PC-3 (cell line): ENCODE measurements at regions of chr2 and their contacts with region 1.

Region 1: DNA sequence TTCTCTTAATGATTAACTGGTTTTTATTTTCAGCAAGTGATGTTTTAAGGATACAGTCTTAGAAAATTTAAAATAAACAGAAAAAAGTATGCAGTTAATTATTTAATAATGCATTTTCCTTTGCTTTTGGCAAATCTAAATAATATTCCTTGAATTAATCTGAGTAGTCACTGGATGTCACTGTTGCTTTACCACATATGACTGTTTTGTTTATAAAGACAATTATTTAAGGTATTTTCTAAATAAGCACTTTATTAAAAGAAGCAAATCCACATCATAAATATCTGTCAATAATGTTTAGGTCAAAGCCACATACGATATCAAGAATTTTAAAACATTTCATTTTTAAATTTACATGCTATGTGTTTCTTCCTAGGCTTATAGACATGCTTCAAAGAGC is 40.6 kb upstream of the TFPI start:
- DNase-seq: no peak
- ATAC-seq: no peak
- H3K4me3 ChIP-seq: no peak overlapping the region
- H3K27ac ChIP-seq: no peak overlapping the region
- H3K4me1 ChIP-seq: no peaks in the 10 kb centered on the region
- H3K27me3 ChIP-seq: no peaks in the 10 kb centered on the region
- CTCF ChIP-seq: peak; percentile 45; the same call in 1 of the 2 replicates

Region 2: DNA sequence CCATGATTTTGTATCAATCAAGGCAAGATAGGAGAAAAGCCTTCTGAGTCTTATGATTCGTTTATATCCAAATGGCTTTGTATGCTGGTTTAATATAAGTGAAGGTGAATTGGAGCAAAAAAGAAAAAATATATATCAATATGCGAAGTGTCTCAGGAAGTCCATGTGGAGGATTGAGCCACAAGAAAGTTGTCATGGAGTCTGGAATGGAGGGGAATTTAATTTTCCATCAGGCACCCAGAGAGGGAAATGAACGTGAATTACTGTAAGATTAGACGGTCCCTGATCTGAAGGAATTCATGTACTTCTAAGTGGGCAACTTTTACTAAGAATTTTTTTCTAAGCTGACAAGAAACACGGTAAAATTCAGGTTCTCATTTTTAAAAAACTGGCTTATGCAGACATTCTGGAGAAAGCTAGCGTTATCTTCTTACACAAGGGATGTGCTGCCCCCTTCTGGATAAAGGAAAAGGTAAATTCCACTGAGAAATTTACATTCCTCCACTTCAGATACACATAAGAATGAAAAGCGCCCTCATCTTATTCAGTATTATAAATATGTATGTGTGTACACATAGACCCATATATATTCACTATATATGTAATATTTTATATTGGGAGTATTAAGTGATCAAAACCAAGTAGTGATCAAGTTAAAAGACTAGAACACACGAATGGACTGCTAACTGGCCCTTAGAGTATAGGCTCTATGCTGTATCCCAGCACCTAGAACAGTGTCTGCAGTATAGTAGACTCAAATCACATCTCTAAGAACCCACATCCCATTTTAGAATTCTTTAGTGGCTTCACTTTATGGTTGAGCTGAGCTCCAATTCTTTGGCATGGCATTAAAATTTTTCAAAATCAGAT is 248.4 kb after region 1 on chr2:
- CTCF ChIA-PET with region 1: interaction called, 3 read pairs
- POLR2A ChIA-PET with region 1: no interaction called
- intact Hi-C with region 1: loop called (anchors 1 kb)
- DNase-seq: peak; percentile 86
- ATAC-seq: peak; percentile 79
- H3K4me3 ChIP-seq: no peak overlapping the region
- H3K27ac ChIP-seq: no peak overlapping the region
- H3K4me1 ChIP-seq: no peaks in the 10 kb centered on the region
- H3K27me3 ChIP-seq: no peaks in the 10 kb centered on the region
- CTCF ChIP-seq: peak; percentile 79

Region 3: GRCh38 chr2:188983427-188984064 is 1388.7 kb after region 1 on chr2:
- CTCF ChIA-PET with region 1: no interaction called
- POLR2A ChIA-PET with region 1: no interaction called
- intact Hi-C with region 1: loop called (anchors 5 kb)
- DNase-seq: peak; percentile 72
- ATAC-seq: no peak
- H3K4me3 ChIP-seq: no peak overlapping the region
- H3K27ac ChIP-seq: no peak overlapping the region
- H3K4me1 ChIP-seq: no peaks in the 10 kb centered on the region
- H3K27me3 ChIP-seq: no peaks in the 10 kb centered on the region
- CTCF ChIP-seq: peak; percentile 76